ENCODE measurements at regions of chr3 and their contacts with region 1.

Region 1: GRCh38 chr3:167032261-167032876 is 347.7 kb downstream of the ZBBX start:
- DNase-seq: peak in 2 of 4 donors; percentile 16 to 48
- ATAC-seq: peak; percentile 53
- H3K4me3 ChIP-seq: no peak overlapping the region
- H3K27ac ChIP-seq: no peak overlapping the region
- H3K4me1 ChIP-seq: peaks cover 5% of the 10 kb centered on the region
- H3K27me3 ChIP-seq: no peaks in the 10 kb centered on the region
- CTCF ChIP-seq: peak; percentile 5 to 76 (median 67)
- POLR2A ChIP-seq: no peak

Region 2: DNA sequence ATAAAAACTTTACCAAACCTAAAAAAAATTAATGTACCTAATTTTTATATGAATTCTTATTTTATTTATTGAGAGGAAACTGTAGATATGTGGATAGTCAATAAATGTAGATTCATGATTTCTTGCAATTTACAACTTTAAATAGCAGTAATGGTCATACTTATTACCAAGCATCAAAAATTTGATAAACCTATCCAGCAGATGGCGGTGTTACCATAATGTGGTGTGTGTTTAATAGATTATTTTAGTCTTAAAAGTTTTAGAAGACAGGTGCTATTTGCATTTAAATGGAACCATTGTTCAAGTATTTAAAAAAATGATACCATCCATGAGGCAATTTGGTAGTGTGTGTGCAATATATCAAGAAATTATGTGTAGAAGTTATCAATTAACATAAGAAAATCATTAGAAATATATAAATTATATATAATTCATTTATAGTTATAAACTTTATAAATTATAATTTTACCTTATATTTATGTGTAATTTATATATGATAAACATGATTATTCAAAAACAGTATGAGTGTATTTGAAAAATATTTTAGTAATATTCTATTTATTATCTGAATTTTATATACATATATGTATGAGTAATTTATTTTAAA is 1019.2 kb before region 1 on chr3:
- intact Hi-C with region 1: loop called (anchors 10 kb)
- DNase-seq: peak in 1 of 4 donors; percentile 25
- ATAC-seq: no peak
- H3K4me3 ChIP-seq: no peak overlapping the region
- H3K27ac ChIP-seq: no peak overlapping the region
- H3K4me1 ChIP-seq: no peaks in the 10 kb centered on the region
- H3K27me3 ChIP-seq: no peaks in the 10 kb centered on the region
- CTCF ChIP-seq: peak in 6 of 7 experiments; percentile 39 to 56 (median 50)
- POLR2A ChIP-seq: no peak

Region 3: GRCh38 chr3:167350245-167350862 is 318.0 kb after region 1 on chr3:
- intact Hi-C with region 1: no loop called
- DNase-seq: peak in 1 of 4 donors; percentile 4
- ATAC-seq: no peak
- H3K4me3 ChIP-seq: no peak overlapping the region
- H3K27ac ChIP-seq: no peak overlapping the region
- H3K4me1 ChIP-seq: peaks cover 12% of the 10 kb centered on the region
- H3K27me3 ChIP-seq: no peaks in the 10 kb centered on the region
- CTCF ChIP-seq: peak; percentile 44 to 84 (median 74)
- POLR2A ChIP-seq: no peak

Measured in body of pancreas (tissue), 4 donors.